ENCODE measurements at regions of chr3 and their contacts with region 1.

Region 1: DNA sequence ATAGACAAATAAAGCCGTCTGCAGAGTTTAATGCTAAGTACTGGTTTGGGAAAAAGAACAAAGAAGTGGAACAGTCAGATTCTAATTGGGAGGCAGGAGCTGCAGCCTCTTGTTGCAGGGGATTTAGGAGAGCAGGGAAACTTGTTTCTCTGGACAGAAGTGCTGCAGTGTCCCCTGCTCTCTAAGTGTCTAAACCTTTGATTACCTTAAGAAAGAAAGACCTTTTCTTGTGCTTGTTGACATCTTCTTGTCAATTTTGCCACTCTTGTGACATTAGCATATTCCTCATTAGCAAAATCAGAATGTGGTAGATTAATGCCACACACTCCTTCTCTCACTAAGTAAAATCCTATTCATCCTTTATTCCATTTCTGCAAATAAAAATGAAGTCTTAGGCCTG is 38.8 kb downstream of the TRAT1 start:
- DNase-seq: no peak
- CTCF ChIP-seq: no peak

Region 2: GRCh38 chr3:108838436-108838835 is 23.0 kb before region 1 on chr3:
- CTCF ChIA-PET with region 1: interaction called, 14 read pairs
- POLR2A ChIA-PET with region 1: no interaction called
- DNase-seq: no peak
- CTCF ChIP-seq: no peak